Ovary (tissue), 10 donors: ENCODE measurements at regions of chr18 and their contacts with region 1.

Region 1: GRCh38 chr18:61743775-61744531 is 148.9 kb downstream of the RNF152 start:
- DNase-seq: peak in 1 of 5 donors; percentile 49
- H3K4me3 ChIP-seq: no peak overlapping the region
- H3K27ac ChIP-seq: no peak overlapping the region
- H3K4me1 ChIP-seq: peaks cover 6% of the 10 kb centered on the region
- H3K27me3 ChIP-seq: no peaks in the 10 kb centered on the region
- CTCF ChIP-seq: no peak
- EP300 ChIP-seq: peak; percentile 25
- POLR2A ChIP-seq: no peak

Region 2: GRCh38 chr18:62999392-62999791 is 1255.4 kb after region 1 on chr18:
- intact Hi-C with region 1: loop called in 1 of 4 experiments (anchors 10 kb)
- DNase-seq: peak; percentile 79 to 90 (median 81)
- H3K4me3 ChIP-seq: no peak overlapping the region
- H3K27ac ChIP-seq: no peak overlapping the region
- H3K4me1 ChIP-seq: peaks cover 5% of the 10 kb centered on the region
- H3K27me3 ChIP-seq: no peaks in the 10 kb centered on the region
- CTCF ChIP-seq: no peak
- EP300 ChIP-seq: no peak
- POLR2A ChIP-seq: no peak